GM10248 (cell line): ENCODE measurements at regions of chr21 and their contacts with region 1.

Region 1: GRCh38 chr21:31772674-31773555 is 41.0 kb upstream of the SCAF4 start:
- DNase-seq: peak; percentile 67
- CTCF ChIP-seq: no peak

Region 2: GRCh38 chr21:31786164-31786920 is 13.4 kb after region 1 on chr21:
- CTCF ChIA-PET with region 1: interaction called, 12 read pairs
- POLR2A ChIA-PET with region 1: no interaction called
- DNase-seq: no peak
- CTCF ChIP-seq: no peak